Motor neuron (in vitro differentiated cells): ENCODE measurements at regions of chr3 and their contacts with region 1.

Region 1: DNA sequence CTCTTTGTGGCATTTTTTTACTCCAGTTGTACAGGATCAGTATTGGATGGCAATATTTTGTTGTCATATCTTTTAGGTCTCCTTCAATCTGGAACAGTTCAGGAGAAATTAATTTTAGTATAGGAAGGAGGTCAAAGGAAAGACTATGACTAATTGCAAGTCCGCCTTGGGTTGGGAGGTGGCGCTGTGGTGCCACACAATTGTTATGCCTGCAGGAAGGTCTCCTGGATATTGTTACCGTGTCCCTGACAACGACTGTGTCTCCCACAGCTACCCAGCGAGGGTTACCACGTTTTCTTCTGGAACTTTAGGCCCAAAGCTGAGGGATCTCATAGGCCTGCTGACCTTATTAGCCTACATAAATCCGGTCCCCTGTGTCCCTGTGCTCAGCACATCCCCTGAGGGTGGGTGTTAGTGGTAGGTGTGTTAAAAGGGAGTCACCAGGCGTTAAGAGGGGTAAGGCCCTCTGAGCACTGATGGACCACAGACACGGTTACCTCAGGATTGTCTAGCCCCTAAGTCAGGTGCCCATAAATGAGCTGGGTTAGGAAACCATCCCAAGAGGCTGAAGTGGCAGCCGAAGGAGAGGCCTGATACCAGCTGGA is 31.5 kb downstream of the KCNAB1 start:
- ATAC-seq: peak; percentile 59 to 95 (median 76)
- H3K4me3 ChIP-seq: no peak overlapping the region
- H3K27ac ChIP-seq: no peak overlapping the region
- H3K4me1 ChIP-seq: peaks cover 5 to 13% of the 10 kb centered on the region in 2 donors

Region 2: GRCh38 chr3:155619118-155619915 is 532.6 kb before region 1 on chr3:
- in situ Hi-C with region 1: no loop called
- ATAC-seq: no peak
- H3K4me3 ChIP-seq: no peak overlapping the region
- H3K27ac ChIP-seq: no peak overlapping the region
- H3K4me1 ChIP-seq: no peaks in the 10 kb centered on the region

Region 3: DNA sequence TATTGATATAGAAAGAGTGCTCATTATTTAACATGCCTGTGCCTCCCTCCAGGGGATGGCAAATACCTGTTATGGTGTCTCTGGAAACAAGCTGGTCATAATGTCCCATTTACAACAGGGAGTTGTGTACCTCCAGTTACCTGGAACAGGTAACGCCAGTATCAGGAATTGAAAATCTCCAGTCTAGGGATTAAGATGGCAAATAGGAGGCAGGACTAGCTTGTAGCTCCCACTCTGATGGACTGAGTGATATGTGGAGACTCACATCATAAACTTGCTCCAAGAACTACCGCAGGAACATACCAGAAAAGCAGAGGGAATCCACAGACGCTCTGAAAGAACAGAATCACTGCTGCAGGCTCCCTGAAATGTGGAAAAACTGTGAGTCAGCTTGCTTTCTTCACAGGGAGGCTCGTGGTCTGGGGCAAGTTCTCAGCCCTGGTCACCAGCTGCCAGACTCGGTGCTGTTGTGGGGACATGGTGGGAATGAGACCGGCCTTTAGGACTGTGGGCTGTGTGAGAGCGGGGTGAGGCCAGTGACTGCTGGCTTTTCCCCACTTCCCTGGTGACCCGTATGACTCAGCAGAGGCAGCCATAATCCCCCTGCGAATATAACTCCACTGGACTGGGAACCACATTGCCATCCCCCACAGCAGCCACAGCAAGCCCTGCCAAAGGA is 65.9 kb after region 1 on chr3:
- in situ Hi-C with region 1: no loop called
- ATAC-seq: peak in 2 of 8 experiments; percentile 11 to 46
- H3K4me3 ChIP-seq: no peak overlapping the region
- H3K27ac ChIP-seq: no peak overlapping the region
- H3K4me1 ChIP-seq: no peaks in the 10 kb centered on the region

Region 4: DNA sequence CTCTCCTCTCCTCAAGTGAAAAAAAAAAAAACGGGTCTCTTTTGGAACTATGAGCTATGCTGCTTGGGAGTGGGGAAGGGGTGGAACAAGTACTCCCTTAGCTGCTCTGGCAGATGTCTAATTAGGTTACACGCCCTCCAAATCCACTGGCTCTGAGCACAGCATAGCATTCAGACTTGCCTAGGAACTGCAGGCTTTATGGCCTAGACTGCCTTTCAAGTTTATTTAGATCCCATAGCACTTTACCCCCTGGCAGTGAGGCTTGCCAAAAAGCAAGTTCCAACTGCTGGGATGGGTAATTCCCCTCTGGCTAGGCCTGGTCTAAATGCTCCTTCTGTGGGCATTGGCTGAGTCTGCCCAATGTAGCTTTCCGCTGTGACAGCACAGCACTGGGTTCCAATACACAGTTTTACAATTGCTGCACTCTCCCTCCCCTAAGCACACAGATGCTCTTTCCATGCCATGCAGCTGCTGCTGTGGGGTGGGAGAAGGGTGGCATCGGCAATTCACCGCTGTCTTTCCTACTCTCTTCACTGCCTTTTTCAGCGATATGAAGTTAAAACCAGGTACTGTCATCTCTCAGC is 121.3 kb after region 1 on chr3:
- in situ Hi-C with region 1: no loop called
- ATAC-seq: peak in 2 of 8 experiments; percentile 42 to 88
- H3K4me3 ChIP-seq: no peak overlapping the region
- H3K27ac ChIP-seq: no peak overlapping the region
- H3K4me1 ChIP-seq: no peaks in the 10 kb centered on the region

Region 5: GRCh38 chr3:156409694-156410093 is 257.8 kb after region 1 on chr3:
- in situ Hi-C with region 1: no loop called
- ATAC-seq: no peak
- H3K4me3 ChIP-seq: no peak overlapping the region
- H3K27ac ChIP-seq: no peak overlapping the region
- H3K4me1 ChIP-seq: no peaks in the 10 kb centered on the region

Region 6: DNA sequence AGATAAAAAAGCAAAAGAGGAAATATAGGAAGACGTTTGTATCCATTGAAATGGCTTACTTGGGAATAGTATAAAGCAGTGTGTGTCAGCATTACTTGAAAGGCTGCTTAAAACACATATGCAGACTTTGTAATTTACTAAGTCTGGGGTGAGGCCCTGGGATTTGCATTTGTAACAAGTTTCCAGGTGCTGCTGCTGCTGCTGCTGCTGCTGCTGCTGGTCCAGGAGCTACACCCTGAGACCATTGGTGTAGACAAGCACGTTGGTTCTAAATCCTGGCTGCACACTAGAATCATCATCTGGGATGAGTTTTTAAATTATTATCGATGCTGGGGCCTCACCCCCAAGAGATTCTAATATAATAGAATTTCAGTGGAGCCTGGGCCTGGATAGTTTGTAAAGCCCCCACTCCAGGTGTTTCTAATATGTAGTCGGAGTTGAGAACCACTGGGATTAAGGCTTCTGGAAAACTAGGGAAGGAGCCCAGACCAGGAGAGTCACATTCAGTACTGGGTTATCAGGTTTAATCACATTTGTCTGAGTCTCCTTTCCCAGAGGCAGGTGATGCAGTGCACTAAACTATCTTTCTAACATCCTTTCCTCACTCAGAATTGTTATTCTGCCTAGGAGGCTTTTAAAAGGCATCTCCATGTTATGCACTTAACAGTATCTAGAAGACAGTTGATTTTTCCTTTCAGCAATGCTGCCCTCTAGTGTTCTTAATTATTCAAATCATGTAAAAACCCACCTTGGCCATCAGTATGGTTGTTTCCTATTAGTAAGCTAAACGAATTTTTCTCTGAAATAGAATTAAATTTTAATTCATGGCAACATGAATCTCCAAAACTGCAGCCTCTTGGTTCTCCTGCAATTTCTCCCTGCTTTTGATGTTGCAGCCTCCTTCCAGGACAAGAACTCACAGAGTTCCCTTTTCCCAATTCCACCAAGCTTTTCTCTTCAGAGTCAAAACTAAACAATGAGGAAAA is 357.6 kb after region 1 on chr3:
- in situ Hi-C with region 1: loop called in 8 of 9 experiments (anchors 25 kb)
- ATAC-seq: peak; percentile 50 to 85 (median 71)
- H3K4me3 ChIP-seq: no peak overlapping the region
- H3K27ac ChIP-seq: no peak overlapping the region
- H3K4me1 ChIP-seq: no peaks in the 10 kb centered on the region

Region 7: GRCh38 chr3:156674046-156674910 is 522.4 kb after region 1 on chr3 and contains the start of gene TIPARP:
- in situ Hi-C with region 1: loop called in 1 of 9 experiments (anchors 25 kb)
- ATAC-seq: peak; percentile 72 to 93 (median 91)
- H3K4me3 ChIP-seq: peak within 1 kb of the TSS; percentile 51 to 85 (median 60)
- H3K27ac ChIP-seq: peak within 1 kb of the TSS; percentile 64 to 80
- H3K4me1 ChIP-seq: peaks cover 6% of the 10 kb centered on the region in 2 donors
- total RNA-seq, gene TIPARP: 8.0 to 28.4 (median 14.6) TPM

Region 8: GRCh38 chr3:157130467-157131251 is 978.7 kb after region 1 on chr3:
- in situ Hi-C with region 1: loop called in 2 of 9 experiments (anchors 25 kb)
- ATAC-seq: peak; percentile 36 to 71 (median 63)
- H3K4me3 ChIP-seq: no peak overlapping the region
- H3K27ac ChIP-seq: peak overlapping the region; percentile 2 to 20
- H3K4me1 ChIP-seq: peaks cover 20 to 24% of the 10 kb centered on the region in 2 donors